T-cell (primary cell): ENCODE measurements at regions of chr15 and their contacts with region 1.

Region 1: DNA sequence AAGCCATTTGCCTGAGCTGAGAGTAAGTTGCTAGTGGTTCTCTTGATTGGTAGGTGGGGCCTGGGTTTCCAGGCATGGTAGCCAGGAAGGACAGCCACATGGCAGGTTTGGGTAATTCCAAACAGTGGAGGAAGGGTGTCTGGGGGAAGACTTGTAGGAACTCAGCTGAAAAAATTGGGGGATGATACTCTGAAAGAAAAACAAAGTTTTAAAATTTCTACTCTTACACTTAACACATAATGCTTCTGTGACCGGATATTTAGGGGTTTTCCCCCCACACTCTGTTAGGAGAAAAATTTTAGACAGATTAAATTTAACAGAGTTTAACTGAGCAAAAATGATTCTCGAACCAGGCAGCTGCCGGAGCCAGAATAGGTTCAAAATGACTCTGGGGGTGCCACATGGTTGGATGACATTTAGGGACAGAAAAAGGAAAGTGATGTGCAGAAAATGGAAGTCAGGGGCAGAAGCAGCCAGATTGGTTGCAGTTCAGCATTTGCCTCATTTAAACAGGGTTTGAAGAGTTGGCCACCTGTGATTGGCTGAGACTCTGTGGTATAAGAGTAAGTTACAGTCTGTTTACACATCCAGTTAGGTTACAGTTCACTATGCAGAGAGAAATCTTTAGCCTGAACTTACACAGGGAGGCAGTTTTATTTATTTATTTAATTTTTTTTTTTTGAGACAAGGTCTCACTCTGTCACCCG is 8.1 kb downstream of the B2M start:
- DNase-seq: peak in 30 of 35 experiments; percentile 34 to 81 (median 50)
- ATAC-seq: peak; percentile 48 to 63 (median 60)
- H3K4me3 ChIP-seq: no peak overlapping the region
- H3K4me3 Mint-ChIP-seq: peak overlapping the region; percentile 61 to 100 (median 67)
- H3K27ac ChIP-seq: peak overlapping the region; percentile 99
- H3K27ac Mint-ChIP-seq: peak overlapping the region; percentile 94 to 97
- H3K4me1 ChIP-seq: peaks cover 61 to 85% of the 10 kb centered on the region in 2 experiments
- H3K4me1 Mint-ChIP-seq: peaks cover 90 to 93% (median 92%) of the 10 kb centered on the region in 3 donors
- H3K27me3 ChIP-seq: no peaks in the 10 kb centered on the region
- H3K27me3 Mint-ChIP-seq: no peaks in the 10 kb centered on the region

Region 2: DNA sequence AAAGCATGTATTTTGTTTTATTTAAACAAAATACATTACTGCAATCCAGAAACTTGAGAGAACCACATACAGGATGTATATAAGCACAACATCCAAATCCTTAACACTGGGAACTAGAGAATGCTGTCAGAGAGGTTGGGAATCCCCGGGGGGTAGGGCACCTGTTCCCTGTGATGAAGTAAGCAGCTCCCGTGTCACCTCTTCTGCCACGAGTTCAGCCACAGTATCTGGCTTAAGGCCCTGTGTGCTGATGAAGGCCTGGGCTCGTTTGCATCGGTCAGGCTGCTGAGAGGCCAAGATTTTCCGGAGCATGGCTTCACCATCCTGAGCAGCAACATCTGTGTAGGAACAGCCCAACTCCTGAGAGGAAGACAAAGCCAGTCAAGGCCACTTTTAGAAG is 146.1 kb before region 1 on chr15:
- CTCF ChIA-PET with region 1: no interaction called
- POLR2A ChIA-PET with region 1: interaction called in 1 of 2 experiments, 12 read pairs
- DNase-seq: no peak
- ATAC-seq: no peak
- H3K4me3 ChIP-seq: no peak overlapping the region
- H3K4me3 Mint-ChIP-seq: no peak overlapping the region
- H3K27ac ChIP-seq: no peak overlapping the region
- H3K27ac Mint-ChIP-seq: no peak overlapping the region
- H3K4me1 ChIP-seq: peaks cover 0 to 4% of the 10 kb centered on the region in 2 experiments
- H3K4me1 Mint-ChIP-seq: peaks cover 6 to 8% (median 8%) of the 10 kb centered on the region in 3 donors
- H3K27me3 ChIP-seq: no peaks in the 10 kb centered on the region
- H3K27me3 Mint-ChIP-seq: no peaks in the 10 kb centered on the region

Region 3: GRCh38 chr15:44738340-44738984 is 19.0 kb after region 1 on chr15:
- CTCF ChIA-PET with region 1: interaction called, 35 to 153 read pairs
- POLR2A ChIA-PET with region 1: interaction called, 77 to 132 read pairs
- DNase-seq: peak in 1 of 35 experiments; percentile 74
- ATAC-seq: no peak
- H3K4me3 ChIP-seq: no peak overlapping the region
- H3K4me3 Mint-ChIP-seq: peak overlapping the region in 2 of 3 donors; percentile 14 to 51
- H3K27ac ChIP-seq: peak overlapping the region; percentile 89
- H3K27ac Mint-ChIP-seq: peak overlapping the region; percentile 80 to 84
- H3K4me1 ChIP-seq: peaks cover 7 to 43% of the 10 kb centered on the region in 2 experiments
- H3K4me1 Mint-ChIP-seq: peaks cover 55 to 59% (median 58%) of the 10 kb centered on the region in 3 donors
- H3K27me3 ChIP-seq: no peaks in the 10 kb centered on the region
- H3K27me3 Mint-ChIP-seq: no peaks in the 10 kb centered on the region

Region 4: GRCh38 chr15:44775953-44776352 is 56.5 kb after region 1 on chr15:
- CTCF ChIA-PET with region 1: no interaction called
- POLR2A ChIA-PET with region 1: interaction called in 1 of 2 experiments, 10 read pairs
- DNase-seq: no peak
- ATAC-seq: no peak
- H3K4me3 ChIP-seq: no peak overlapping the region
- H3K4me3 Mint-ChIP-seq: no peak overlapping the region
- H3K27ac ChIP-seq: no peak overlapping the region
- H3K27ac Mint-ChIP-seq: no peak overlapping the region
- H3K4me1 ChIP-seq: no peaks in the 10 kb centered on the region
- H3K4me1 Mint-ChIP-seq: peaks cover 3 to 6% (median 5%) of the 10 kb centered on the region in 3 donors
- H3K27me3 ChIP-seq: no peaks in the 10 kb centered on the region
- H3K27me3 Mint-ChIP-seq: no peaks in the 10 kb centered on the region

Region 5: DNA sequence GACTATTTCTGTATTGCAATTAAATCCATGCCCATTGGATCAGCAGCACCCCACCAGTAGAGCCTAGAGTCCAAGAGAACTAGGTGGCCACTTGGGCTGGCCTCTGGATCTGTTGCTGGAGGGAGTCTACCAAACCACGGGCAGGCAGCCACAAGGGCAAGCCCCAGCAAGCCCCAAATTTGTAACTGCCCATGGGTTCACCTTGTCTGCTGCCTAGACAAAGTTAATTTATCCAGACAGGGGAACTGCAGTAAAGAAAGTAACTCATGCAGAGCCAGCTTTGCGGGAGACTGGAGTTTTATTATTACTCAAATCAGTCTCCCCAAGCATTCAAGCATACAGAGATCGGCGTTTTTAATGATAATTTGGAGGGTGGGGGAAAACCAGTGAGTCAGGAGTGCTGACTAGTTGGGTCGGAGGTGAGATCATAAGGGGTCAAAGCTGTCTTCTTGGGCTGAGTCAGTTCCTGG is 163.1 kb after region 1 on chr15:
- CTCF ChIA-PET with region 1: no interaction called
- POLR2A ChIA-PET with region 1: no interaction called
- DNase-seq: no peak
- ATAC-seq: no peak
- H3K4me3 ChIP-seq: no peak overlapping the region
- H3K4me3 Mint-ChIP-seq: no peak overlapping the region
- H3K27ac ChIP-seq: no peak overlapping the region
- H3K27ac Mint-ChIP-seq: no peak overlapping the region
- H3K4me1 ChIP-seq: no peaks in the 10 kb centered on the region
- H3K4me1 Mint-ChIP-seq: peaks cover 0 to 13% (median 0%) of the 10 kb centered on the region in 3 donors
- H3K27me3 ChIP-seq: no peaks in the 10 kb centered on the region
- H3K27me3 Mint-ChIP-seq: peaks cover 4 to 7% of the 10 kb centered on the region in 2 donors